ENCODE measurements at regions of chr20 and their contacts with region 1.

Region 1: DNA sequence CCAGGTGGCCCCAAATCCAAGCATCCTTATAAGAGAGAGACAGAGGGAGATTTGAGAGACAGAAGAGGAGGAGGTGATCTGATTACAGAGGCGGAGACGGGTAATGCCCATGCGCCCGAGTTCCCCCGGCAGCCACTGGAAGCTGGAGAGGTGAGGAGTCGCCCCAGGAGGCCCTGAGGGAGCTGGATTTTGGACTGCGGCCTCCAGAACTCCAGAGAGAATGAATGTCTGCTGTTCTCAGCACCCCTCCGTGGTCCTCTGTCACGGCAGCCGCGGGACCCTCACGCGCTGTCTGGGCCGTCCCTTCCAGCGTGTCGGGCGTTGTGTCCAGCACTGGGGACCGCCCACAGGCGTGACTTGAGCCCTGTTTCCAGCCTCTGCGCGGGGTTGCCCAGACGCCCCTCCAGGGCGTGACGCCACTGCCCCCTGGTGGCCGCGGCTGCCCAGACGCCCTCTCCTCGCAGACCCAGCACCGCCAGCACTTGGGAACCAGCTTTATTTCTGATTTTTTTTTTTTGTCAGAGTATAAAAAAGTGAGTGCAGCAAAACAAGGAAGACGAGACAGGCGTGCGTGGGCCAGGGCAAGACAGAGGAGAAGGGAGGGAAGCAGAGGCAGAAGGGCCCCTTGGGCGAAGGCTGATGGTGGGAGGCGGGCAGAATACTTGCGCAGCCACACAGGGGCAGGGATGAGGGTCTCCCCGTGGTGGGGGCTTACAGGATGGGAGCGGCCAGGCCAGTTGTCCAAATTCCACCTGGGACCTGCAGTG is 4.1 kb upstream of the ZNF512B start:
- DNase-seq: peak; percentile 84
- H3K4me3 ChIP-seq: peak overlapping the region; percentile 14 to 30
- H3K27ac ChIP-seq: peak overlapping the region; percentile 65 to 74
- H3K4me1 ChIP-seq: peaks cover 17% of the 10 kb centered on the region
- H3K27me3 ChIP-seq: no peaks in the 10 kb centered on the region
- CTCF ChIP-seq: peak; percentile 95 to 99 (median 97)
- POLR2A ChIP-seq: no peak

Region 2: DNA sequence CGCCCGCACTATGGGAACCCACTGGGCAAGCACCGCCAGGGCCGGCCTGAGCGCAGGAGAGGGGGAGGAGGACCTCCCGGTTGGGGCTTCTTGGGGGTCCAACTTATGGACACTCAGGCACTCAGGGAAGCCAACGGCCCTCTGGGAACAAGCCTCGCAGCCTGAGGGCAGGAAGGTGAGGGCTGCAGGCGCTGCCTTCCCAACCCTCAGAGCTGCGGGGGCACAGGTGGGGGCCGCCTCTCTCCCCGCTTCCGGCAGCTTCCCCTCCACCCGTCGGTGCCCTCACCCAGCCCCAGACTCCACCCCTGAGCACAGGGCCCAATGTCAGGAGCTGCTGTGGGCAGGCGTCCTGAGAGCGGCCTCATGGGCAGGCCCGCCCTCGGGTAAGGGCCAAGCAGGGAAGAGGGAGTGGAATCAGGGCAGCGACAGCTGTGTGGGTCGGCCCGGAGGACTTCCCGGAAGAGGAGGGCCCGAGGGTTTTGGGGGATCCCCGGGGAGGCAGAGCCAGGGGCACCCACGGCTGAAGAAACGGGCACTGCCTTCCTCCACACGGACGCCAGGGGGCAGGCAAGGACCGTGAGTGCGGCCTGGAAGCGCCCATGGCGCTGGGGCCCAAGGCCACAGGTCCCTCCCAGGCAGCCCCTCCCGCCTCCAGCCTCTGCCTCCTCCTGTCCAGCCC is 436.2 kb before region 1 on chr20:
- intact Hi-C with region 1: loop called (anchors 5 kb)
- DNase-seq: peak; percentile 64
- H3K4me3 ChIP-seq: peak overlapping the region in 1 of 2 donors; percentile 17
- H3K27ac ChIP-seq: peak overlapping the region; percentile 73 to 80
- H3K4me1 ChIP-seq: peaks cover 5% of the 10 kb centered on the region
- H3K27me3 ChIP-seq: no peaks in the 10 kb centered on the region
- CTCF ChIP-seq: peak; percentile 84 to 99 (median 95)
- POLR2A ChIP-seq: peak; percentile 13

Region 3: DNA sequence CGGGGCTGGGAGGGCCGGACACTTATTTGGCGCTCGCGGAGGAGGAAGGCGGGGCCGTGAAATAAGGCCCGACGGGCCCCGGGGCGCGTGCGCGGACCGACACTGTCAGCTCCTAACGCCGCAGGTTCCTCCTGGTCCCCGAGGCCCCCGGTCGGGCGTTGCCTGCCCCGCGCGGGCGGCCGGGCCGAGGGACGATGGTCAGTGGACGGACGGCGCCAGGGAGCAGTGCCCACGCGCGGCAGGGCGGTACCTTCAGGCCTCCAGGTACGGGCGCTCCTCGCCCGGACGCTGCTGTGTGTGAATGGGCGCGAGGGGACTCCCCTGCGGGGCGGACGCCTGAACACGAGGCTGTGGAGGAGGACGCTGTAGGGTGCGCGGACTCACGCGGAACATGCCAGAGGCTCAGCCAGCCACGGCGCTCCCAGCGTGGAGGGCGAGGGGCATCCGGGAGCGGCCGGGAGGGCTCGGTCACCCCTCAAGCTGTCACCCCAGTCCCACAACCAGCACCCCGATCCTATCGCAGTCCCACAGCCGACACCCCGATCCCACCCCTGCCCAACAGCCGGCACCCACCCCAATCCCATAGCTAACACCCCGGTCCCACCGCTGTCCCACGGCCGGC is 346.6 kb before region 1 on chr20:
- intact Hi-C with region 1: loop called (anchors 10 kb)
- DNase-seq: peak; percentile 93
- H3K4me3 ChIP-seq: peak overlapping the region; percentile 95 to 98
- H3K27ac ChIP-seq: peak overlapping the region; percentile 94 to 97
- H3K4me1 ChIP-seq: no peaks in the 10 kb centered on the region
- H3K27me3 ChIP-seq: no peaks in the 10 kb centered on the region
- CTCF ChIP-seq: peak in 2 of 4 experiments; percentile 8 to 18
- POLR2A ChIP-seq: peak; percentile 78

Region 4: GRCh38 chr20:63641792-63642544 is 331.9 kb before region 1 on chr20:
- intact Hi-C with region 1: loop called (anchors 10 kb)
- DNase-seq: peak; percentile 92
- H3K4me3 ChIP-seq: peak overlapping the region; percentile 48 to 60
- H3K27ac ChIP-seq: peak overlapping the region; percentile 76 to 79
- H3K4me1 ChIP-seq: no peaks in the 10 kb centered on the region
- H3K27me3 ChIP-seq: no peaks in the 10 kb centered on the region
- CTCF ChIP-seq: peak; percentile 16 to 88 (median 54)
- POLR2A ChIP-seq: peak; percentile 65

Region 5: DNA sequence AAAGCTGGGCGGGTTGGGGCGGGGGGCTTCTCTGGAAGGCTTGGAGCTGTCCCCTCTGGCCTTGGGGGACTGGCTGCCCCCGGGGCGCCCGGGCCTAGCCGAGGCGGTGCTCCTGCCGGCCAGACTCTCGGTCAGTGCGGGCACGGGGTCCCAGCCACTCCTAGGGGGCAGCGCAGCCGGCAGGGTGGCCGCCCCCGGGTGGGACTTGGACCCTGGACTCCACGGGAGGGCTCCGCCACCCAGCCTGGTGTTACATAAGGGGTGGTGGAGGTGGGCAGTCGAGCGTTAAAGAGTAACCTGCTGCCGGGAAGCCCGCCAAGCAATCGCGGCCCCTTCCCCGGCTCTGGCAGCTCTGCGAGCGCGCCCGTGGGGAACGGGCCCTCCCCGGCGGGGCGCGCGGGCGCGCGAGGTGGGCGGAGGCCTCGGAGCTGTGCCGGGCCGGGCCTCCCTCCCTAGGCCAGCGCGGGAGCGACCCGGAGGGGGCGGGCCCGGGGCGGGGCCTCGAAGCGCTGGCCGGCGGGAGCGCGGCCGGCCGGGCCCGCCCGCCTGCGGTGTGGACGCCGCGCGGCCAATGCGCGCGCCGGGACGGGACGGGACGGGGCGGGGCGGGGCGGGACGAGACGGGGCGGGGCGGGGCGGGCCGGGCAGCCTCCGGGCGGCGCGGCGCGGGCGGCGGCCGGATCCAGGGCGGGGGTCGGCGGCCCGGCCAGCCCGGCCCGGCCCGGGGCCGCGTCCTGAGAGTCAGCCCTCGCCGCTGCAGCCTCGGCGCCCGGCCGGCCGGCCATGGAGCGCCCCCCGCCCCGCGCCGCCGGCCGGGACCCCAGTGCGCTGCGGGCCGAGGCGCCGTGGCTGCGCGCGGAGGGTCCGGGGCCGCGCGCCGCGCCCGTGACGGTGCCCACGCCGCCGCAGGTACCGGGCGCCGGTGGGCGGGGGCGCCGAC is 234.4 kb before region 1 on chr20 and contains the start of gene SLC2A4RG:
- intact Hi-C with region 1: loop called (anchors 10 kb)
- DNase-seq: peak; percentile 71
- H3K4me3 ChIP-seq: peak within 1 kb of the TSS; percentile 72 to 75
- H3K27ac ChIP-seq: peak within 1 kb of the TSS; percentile 96
- H3K4me1 ChIP-seq: peaks cover 35% of the 10 kb centered on the region
- H3K27me3 ChIP-seq: no peaks in the 10 kb centered on the region
- CTCF ChIP-seq: peak in 1 of 4 experiments; percentile 7
- POLR2A ChIP-seq: peak; percentile 27
- total RNA-seq, gene SLC2A4RG: 140 to 155 TPM

Region 6: GRCh38 chr20:63775096-63775978 is 198.5 kb before region 1 on chr20:
- intact Hi-C with region 1: loop called (anchors 10 kb)
- DNase-seq: no peak
- H3K4me3 ChIP-seq: peak overlapping the region in 1 of 2 donors; percentile 17
- H3K27ac ChIP-seq: no peak overlapping the region
- H3K4me1 ChIP-seq: no peaks in the 10 kb centered on the region
- H3K27me3 ChIP-seq: no peaks in the 10 kb centered on the region
- CTCF ChIP-seq: peak; percentile 44 to 75 (median 55)
- POLR2A ChIP-seq: no peak

Region 7: GRCh38 chr20:63908008-63908624 is 65.7 kb before region 1 on chr20:
- intact Hi-C with region 1: loop called (anchors 5 kb)
- DNase-seq: no peak
- H3K4me3 ChIP-seq: no peak overlapping the region
- H3K27ac ChIP-seq: no peak overlapping the region
- H3K4me1 ChIP-seq: peaks cover 3% of the 10 kb centered on the region
- H3K27me3 ChIP-seq: no peaks in the 10 kb centered on the region
- CTCF ChIP-seq: no peak
- POLR2A ChIP-seq: no peak

Measured in prostate gland (tissue), 2 donors.